CD4-positive, alpha-beta T cell (primary cell): ENCODE measurements at regions of chr18 and their contacts with region 1.

Region 1: DNA sequence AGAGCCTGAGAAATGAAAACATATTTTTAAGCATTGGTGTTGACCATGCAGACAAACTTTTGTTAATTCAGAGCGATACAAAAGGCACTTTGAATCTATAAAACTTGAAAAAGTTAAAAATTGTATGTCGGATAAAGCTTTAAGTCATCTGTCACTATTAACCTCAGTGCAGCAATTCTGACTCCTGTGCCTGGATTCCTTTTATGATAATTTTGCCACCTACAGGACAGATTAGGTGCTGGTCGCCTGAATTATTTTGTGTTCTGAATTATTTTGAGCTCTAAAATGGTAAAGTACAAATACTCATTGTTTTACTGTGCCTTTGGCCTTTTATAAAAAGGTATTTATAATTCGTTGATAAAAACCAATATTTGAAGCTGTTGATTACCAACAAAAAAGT is 19.4 kb upstream of the RNF138 start:
- DNase-seq: peak in 5 of 14 experiments; percentile 4 to 61 (median 61)
- ATAC-seq: peak; percentile 80
- H3K4me3 ChIP-seq: no peak overlapping the region
- H3K4me3 Mint-ChIP-seq: no peak overlapping the region
- H3K27ac ChIP-seq: no peak overlapping the region
- H3K27ac Mint-ChIP-seq: peak overlapping the region; percentile 35
- H3K4me1 ChIP-seq: no peaks in the 10 kb centered on the region
- H3K4me1 Mint-ChIP-seq: peaks cover 23% of the 10 kb centered on the region
- H3K27me3 ChIP-seq: no peaks in the 10 kb centered on the region
- H3K27me3 Mint-ChIP-seq: no peaks in the 10 kb centered on the region
- CTCF ChIP-seq: peak; percentile 66

Region 2: GRCh38 chr18:31526374-31526773 is 545.9 kb before region 1 on chr18:
- CTCF ChIA-PET with region 1: no interaction called
- POLR2A ChIA-PET with region 1: no interaction called
- intact Hi-C with region 1: no loop called
- DNase-seq: no peak
- ATAC-seq: no peak
- H3K4me3 ChIP-seq: no peak overlapping the region
- H3K4me3 Mint-ChIP-seq: no peak overlapping the region
- H3K27ac ChIP-seq: no peak overlapping the region
- H3K27ac Mint-ChIP-seq: no peak overlapping the region
- H3K4me1 ChIP-seq: no peaks in the 10 kb centered on the region
- H3K4me1 Mint-ChIP-seq: no peaks in the 10 kb centered on the region
- H3K27me3 ChIP-seq: no peaks in the 10 kb centered on the region
- H3K27me3 Mint-ChIP-seq: peaks cover 8% of the 10 kb centered on the region
- CTCF ChIP-seq: no peak

Region 3: DNA sequence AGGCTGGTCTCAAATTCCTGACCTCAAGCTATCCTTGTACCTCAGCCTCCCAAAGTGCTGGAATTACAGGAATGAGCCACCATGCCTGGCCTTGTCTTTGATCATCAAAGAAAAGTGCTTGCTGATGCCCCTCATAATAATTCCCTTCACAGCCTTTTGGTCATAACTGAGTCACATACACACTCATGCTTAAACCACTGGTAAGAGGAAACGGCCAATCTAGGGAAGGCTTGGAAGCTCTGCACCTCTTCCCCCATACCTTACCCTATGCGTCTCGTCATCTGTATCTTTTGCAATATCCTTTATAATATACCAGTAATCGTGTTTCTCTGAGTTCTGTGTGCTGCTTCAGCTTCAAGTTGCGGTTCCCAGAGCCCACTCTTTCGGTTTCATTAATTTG is 14.5 kb after region 1 on chr18:
- CTCF ChIA-PET with region 1: interaction called, 13 read pairs
- POLR2A ChIA-PET with region 1: interaction called, 13 read pairs
- intact Hi-C with region 1: loop called in 1 of 2 experiments (anchors 2 kb)
- DNase-seq: peak in 2 of 14 experiments; percentile 37 to 56
- ATAC-seq: no peak
- H3K4me3 ChIP-seq: no peak overlapping the region
- H3K4me3 Mint-ChIP-seq: peak overlapping the region; percentile 30
- H3K27ac ChIP-seq: no peak overlapping the region
- H3K27ac Mint-ChIP-seq: peak overlapping the region; percentile 43
- H3K4me1 ChIP-seq: peaks cover 38% of the 10 kb centered on the region
- H3K4me1 Mint-ChIP-seq: peaks cover 53% of the 10 kb centered on the region
- H3K27me3 ChIP-seq: no peaks in the 10 kb centered on the region
- H3K27me3 Mint-ChIP-seq: peaks cover 5% of the 10 kb centered on the region
- CTCF ChIP-seq: no peak